Right ventricle myocardium superior (tissue), 1 donor: ENCODE measurements at regions of chr1 and their contacts with region 1.

Region 1: DNA sequence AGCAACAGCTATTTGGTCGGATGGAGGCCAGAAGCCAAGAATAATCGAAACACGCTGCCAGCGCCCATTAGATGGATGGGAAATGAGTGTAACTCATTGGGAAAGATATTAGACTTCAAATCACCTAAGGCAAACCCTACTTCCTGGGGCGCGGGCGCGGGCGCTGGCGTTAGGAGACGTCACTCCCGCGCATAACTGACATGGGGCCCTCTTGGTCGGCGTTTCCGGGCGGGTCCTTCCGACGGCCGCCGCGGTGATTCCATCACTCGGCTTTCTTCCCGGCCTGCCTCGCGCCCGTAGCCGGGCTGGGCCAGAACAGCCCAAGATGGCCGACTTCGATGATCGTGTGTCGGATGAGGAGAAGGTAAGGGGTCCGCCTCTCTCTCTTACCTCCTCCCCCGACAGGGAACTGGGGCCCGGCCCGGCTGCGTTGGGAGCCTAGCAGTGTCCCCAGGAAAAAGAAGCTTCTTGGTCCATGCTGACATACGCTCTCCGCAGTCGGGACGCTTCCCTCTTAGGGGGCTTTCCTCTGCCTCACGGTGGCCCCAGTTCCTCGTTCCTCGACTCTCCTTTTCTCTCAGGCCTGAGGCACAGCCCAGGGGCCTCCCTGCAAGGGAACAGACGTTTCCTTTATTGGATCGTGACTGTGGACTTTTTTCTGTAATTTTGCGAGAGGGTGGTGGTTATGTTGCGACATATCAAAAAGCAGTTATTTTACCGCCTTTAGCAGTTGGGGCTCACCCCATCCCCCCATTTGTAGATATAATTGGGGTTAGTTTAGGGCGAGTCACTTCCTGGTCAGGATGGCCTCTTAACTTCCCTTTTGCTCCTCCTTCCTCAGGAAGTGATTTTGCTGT is at the start of gene CAPZA1:
- DNase-seq: peak; percentile 95
- ATAC-seq: peak; percentile 98
- total RNA-seq, gene CAPZA1: 20.7 TPM

Region 2: DNA sequence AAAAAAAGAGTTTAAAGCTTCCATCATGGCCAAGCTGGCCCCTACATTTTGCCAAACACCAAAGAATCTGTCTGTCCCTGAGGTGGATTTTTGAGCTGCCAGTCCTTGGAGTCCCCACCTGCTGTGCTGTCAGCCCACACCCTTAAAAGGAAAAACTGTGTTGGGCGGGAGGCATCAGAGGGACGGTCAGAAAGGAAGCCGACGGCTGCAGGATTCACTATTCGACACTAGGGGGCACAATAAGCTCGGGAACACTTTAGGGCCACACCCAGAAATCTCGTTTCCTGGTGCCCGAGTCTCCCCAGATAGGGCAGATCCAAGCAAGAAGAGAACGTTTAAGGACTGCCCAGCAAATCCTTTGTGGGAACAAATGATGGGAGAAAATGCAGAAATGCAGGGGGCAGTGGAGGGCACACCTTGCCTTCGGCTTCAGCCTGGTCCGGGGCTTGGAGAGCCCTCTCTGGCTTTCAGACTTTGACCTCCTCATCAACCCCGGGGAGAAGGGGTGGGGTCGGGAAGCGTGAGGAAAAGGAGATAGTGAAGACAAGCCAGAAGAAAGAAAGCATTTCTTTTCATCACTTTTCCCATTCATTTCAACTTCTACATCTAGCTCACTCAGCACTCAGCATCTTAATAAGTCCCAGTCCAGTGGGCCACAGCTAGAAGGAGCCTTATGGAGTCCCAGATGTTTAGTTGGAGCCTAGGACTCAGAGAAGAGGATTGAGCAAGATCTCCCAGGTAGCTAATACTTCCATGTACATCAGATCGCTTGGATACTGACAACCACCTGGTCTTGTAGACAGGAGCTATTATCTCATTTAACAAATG is 228.8 kb before region 1 on chr1:
- intact Hi-C with region 1: loop called (anchors 10 kb)
- DNase-seq: peak; percentile 88
- ATAC-seq: peak; percentile 92

Region 3: GRCh38 chr1:112501810-112502641 is 117.7 kb before region 1 on chr1:
- intact Hi-C with region 1: loop called (anchors 10 kb)
- DNase-seq: peak; percentile 83
- ATAC-seq: peak; percentile 95

Region 4: GRCh38 chr1:112706908-112707663 is 87.3 kb after region 1 on chr1 and contains the start of gene RHOC:
- intact Hi-C with region 1: loop called (anchors 5 kb)
- DNase-seq: peak; percentile 92
- ATAC-seq: peak; percentile 90
- total RNA-seq, gene RHOC: 98.2 TPM